ENCODE measurements at regions of chr18 and their contacts with region 1.

Region 1: DNA sequence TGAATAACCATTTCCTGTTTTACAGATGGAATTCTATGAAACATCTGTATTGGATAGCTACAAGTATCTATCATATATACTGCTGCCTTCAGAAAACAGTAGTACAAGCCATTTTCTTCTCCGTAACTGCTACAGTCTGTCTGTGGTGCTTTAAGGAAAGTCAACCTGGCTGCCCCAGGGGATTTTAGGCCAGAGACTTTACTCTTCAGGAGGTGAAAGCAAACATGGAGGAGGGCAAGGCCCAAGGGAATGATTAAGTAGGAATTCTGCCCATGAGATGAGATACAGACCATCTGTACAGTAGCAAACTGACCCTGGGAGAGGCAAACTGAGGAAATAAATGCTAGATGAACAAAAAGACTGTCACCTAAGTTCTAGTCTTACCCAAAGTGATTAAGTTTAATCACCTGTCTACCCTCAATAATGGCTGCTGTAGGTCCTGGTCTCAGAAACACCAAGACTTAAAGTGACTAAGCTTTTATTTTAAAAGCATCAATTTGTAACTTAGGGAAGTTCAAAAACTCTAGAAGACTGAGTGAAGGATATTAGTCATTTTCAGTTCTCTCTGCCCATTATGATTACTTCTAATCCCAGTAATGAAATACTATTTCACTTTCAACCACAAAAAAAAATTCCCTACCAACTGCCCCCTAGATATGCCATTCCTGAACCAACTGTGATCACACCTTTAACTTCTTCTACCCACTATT is 14.8 kb downstream of the MBD2 start:
- DNase-seq: no peak
- ATAC-seq: peak; percentile 87
- H3K4me3 Mint-ChIP-seq: peak overlapping the region; percentile 34
- H3K27ac Mint-ChIP-seq: peak overlapping the region; percentile 81
- H3K4me1 Mint-ChIP-seq: peaks cover 56% of the 10 kb centered on the region
- H3K27me3 Mint-ChIP-seq: no peaks in the 10 kb centered on the region
- CTCF ChIP-seq: no peak

Region 2: GRCh38 chr18:54173980-54174630 is 35.5 kb before region 1 on chr18:
- CTCF ChIA-PET with region 1: interaction called, 3 read pairs
- POLR2A ChIA-PET with region 1: no interaction called
- intact Hi-C with region 1: loop called (anchors 5 kb)
- DNase-seq: peak; percentile 22
- ATAC-seq: peak; percentile 77
- H3K4me3 Mint-ChIP-seq: no peak overlapping the region
- H3K27ac Mint-ChIP-seq: peak overlapping the region; percentile 90
- H3K4me1 Mint-ChIP-seq: peaks cover 39% of the 10 kb centered on the region
- H3K27me3 Mint-ChIP-seq: no peaks in the 10 kb centered on the region
- CTCF ChIP-seq: no peak

Region 3: DNA sequence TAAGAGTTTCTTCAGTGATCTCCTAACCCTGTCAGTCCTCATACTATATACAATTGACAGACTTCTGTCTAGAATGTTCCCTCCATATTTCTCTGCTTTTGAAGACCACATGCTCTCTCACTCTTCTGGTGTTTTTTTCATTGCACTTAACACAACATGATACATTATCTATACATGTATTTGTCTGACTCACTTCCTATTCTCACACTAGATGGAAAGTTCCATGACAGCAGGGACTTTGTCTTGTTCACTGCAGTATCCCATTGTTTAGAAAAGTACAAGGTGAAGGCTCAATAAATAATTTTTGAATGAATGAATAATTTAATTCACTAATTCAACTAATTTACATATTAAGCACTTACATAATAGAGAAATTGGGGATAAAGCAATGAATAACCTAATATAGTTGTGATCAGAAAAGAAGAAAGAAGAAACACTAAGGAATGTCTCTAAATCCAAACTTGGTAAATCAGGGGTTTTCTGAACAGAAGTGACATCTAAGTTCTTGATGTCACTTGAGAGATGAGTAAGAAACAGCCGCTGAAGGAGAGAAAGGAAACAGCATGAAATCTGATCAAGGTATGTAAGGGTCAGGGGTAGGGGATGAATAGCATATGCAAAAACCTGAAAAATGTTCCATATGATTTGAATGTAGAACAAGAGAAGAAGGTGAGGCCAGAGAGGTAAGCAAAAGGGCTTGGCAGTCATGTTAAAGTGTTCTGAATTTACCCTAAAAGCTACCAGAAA is 27.6 kb before region 1 on chr18:
- CTCF ChIA-PET with region 1: interaction called, 3 read pairs
- POLR2A ChIA-PET with region 1: no interaction called
- intact Hi-C with region 1: loop called (anchors 2 kb)
- DNase-seq: peak; percentile 15
- ATAC-seq: peak; percentile 86
- H3K4me3 Mint-ChIP-seq: no peak overlapping the region
- H3K27ac Mint-ChIP-seq: no peak overlapping the region
- H3K4me1 Mint-ChIP-seq: peaks cover 3% of the 10 kb centered on the region
- H3K27me3 Mint-ChIP-seq: no peaks in the 10 kb centered on the region
- CTCF ChIP-seq: no peak

Region 4: DNA sequence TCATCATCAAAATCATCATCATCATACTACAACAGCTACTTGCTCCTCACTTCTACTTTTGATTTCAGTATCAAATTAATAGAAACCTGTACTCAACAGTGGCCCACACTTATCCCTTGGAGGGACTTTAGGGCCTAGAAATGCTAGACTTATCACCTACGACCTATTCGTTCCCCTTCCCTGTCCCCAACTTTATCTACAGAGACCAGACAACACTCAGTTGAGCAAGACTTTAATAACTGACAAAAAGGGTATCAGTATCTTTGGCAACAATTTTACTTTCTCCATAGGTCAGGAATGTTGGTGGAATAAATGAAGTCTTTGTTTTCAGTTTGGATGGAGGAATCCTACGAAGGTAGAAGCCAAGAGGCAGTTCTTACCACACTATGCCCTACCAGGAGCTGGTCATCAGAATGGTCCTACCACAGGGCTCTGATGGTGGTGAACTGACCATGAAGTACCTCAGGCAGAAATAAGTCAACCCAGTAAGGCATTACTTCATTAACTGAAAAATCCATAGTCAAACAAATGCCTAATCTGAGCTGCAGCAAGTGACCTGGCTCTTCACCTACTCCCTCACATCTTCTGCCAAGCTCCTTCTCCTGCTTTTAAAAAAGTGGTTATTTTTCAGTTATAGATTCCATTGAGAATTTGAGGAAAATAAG is 11.7 kb before region 1 on chr18:
- CTCF ChIA-PET with region 1: no interaction called
- POLR2A ChIA-PET with region 1: no interaction called
- intact Hi-C with region 1: no loop called
- DNase-seq: no peak
- ATAC-seq: no peak
- H3K4me3 Mint-ChIP-seq: no peak overlapping the region
- H3K27ac Mint-ChIP-seq: no peak overlapping the region
- H3K4me1 Mint-ChIP-seq: peaks cover 10% of the 10 kb centered on the region
- H3K27me3 Mint-ChIP-seq: no peaks in the 10 kb centered on the region
- CTCF ChIP-seq: no peak

Measured in activated CD8-positive, alpha-beta T cell treated with anti-CD3 and anti-CD28 coated beads for 36 hours (primary cell).